Astrocyte of the cerebellum (primary cell): ENCODE measurements at regions of chr10 and their contacts with region 1.

Region 1: GRCh38 chr10:9294865-9295264 is 1240.4 kb downstream of the GATA3 start:
- DNase-seq: no peak
- H3K4me3 ChIP-seq: no peak overlapping the region
- CTCF ChIP-seq: no peak

Region 2: DNA sequence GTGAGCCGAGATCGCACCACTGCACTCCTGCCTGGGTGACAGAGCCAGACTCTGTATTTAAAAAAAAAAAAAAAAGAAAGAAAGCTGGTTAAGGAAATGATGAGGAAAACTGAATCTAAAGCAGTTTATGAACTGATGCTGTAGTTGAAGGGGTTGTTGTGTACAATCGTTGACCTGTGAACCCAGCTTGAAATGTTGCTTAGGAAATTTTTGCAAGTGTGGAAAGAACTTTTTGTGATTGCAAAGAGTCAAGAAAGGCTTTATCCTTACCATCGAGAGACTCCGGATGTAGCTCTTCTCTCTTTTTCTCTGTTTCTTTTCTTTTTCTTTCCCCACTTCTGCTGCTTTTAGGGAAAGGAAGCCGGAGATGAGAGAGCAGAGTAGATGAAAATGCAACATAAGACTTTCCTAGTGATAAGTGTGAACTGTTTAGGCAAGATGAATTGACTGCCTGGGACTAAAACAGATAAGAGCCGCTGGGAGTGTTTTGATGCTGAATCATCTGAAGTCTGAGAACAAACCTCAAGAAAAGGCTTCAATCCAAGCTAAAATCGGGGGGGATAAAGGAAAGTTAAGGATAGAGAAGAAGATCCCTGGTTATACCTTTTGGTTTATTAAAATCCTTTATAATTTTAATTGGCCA is 1407.6 kb before region 1 on chr10:
- in situ Hi-C with region 1: loop called (anchors 25 kb)
- DNase-seq: no peak
- H3K4me3 ChIP-seq: no peak overlapping the region
- CTCF ChIP-seq: no peak

Region 3: DNA sequence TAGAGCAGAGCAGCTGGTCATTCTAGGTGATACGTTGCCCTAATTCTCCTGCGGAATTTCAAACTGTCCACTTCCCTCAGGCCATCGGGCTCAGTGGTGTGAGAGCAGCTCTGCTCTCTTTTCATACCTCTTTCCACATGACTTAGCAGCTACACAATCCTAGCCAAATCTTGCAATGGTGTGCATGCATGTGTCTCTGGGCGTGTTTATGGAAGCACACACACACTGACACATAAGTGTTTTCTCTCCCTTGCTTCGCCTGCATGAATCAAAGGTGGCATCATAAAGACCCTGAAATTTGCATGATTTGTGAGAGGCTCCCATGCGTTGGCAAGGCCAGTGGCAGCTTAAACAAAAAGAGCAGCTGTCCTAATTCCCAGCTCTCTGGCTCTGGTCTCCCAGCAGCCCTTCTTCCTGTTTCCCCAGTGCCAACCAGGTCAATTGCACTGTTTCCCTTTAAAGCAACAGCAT is 50.9 kb before region 1 on chr10:
- in situ Hi-C with region 1: no loop called
- DNase-seq: no peak
- H3K4me3 ChIP-seq: no peak overlapping the region
- CTCF ChIP-seq: no peak